ENCODE measurements at regions of chr19 and their contacts with region 1.

Region 1: DNA sequence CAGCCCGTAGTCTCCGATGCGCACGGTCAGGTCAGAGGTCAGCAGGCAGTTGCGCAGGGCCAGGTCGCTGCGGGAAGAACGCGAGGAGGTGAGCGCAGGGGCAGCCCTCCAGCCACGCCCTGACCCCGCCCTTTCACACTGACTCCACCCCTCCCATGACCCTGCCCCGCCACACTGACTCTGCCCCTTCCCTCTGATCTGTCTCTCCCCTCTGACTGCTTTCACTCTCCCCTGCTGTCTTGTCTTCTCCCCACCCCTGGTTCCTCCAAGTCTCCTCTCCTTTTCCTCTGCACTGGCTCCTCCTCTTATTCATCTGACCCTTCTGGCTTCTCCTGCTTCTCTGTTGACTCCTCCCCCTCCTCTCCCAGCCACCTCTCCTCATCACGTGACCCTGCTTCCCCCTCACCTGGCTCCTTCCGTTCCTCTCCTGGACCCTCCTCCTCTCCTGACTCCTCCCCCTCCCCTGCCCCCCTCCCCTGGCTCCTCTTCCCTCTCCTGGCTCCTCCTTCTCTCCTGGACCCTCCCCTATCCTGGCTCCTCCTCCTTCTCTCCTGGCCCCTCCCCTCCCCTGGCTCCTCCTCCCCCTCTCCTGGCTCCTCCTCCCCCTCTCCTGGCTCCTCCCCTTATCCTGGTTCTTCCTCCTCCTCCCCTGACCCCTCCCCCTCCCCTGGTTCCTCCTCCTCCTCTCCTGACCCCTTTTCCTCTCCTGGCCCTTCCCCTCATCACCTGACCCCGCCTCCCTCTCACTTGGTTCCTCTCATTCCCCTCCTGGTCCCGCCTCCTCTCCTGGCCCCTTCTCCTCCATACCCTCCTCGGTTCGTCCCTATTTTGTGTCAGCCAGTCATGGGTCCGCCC is 9.9 kb downstream of the LMTK3 start:
- DNase-seq: peak; percentile 58 to 94 (median 90)
- ATAC-seq: peak; percentile 86
- H3K4me3 ChIP-seq: peak overlapping the region; percentile 19 to 43
- H3K27ac ChIP-seq: peak overlapping the region; percentile 19 to 33
- H3K4me1 ChIP-seq: peaks cover 0 to 34% of the 10 kb centered on the region in 2 donors
- H3K27me3 ChIP-seq: peaks cover 12 to 60% of the 10 kb centered on the region in 2 donors
- CTCF ChIP-seq: no peak

Region 2: GRCh38 chr19:48445606-48446481 is 55.9 kb before region 1 on chr19 and contains the start of gene GRWD1:
- intact Hi-C with region 1: no loop called
- DNase-seq: peak; percentile 90 to 95 (median 94)
- ATAC-seq: peak; percentile 93
- H3K4me3 ChIP-seq: peak within 1 kb of the TSS; percentile 64 to 99
- H3K27ac ChIP-seq: peak within 1 kb of the TSS; percentile 90 to 94
- H3K4me1 ChIP-seq: peaks cover 16 to 43% of the 10 kb centered on the region in 2 donors
- H3K27me3 ChIP-seq: peaks cover 11 to 43% of the 10 kb centered on the region in 2 donors
- CTCF ChIP-seq: no peak
- polyA plus RNA-seq, gene GRWD1: 18.4 to 29.0 (median 24.4) TPM

Region 3: GRCh38 chr19:48461982-48462655 is 39.6 kb before region 1 on chr19:
- intact Hi-C with region 1: no loop called
- DNase-seq: peak in 1 of 4 donors; percentile 73
- ATAC-seq: no peak
- H3K4me3 ChIP-seq: no peak overlapping the region
- H3K27ac ChIP-seq: no peak overlapping the region
- H3K4me1 ChIP-seq: no peaks in the 10 kb centered on the region
- H3K27me3 ChIP-seq: no peaks in the 10 kb centered on the region
- CTCF ChIP-seq: no peak

Region 4: DNA sequence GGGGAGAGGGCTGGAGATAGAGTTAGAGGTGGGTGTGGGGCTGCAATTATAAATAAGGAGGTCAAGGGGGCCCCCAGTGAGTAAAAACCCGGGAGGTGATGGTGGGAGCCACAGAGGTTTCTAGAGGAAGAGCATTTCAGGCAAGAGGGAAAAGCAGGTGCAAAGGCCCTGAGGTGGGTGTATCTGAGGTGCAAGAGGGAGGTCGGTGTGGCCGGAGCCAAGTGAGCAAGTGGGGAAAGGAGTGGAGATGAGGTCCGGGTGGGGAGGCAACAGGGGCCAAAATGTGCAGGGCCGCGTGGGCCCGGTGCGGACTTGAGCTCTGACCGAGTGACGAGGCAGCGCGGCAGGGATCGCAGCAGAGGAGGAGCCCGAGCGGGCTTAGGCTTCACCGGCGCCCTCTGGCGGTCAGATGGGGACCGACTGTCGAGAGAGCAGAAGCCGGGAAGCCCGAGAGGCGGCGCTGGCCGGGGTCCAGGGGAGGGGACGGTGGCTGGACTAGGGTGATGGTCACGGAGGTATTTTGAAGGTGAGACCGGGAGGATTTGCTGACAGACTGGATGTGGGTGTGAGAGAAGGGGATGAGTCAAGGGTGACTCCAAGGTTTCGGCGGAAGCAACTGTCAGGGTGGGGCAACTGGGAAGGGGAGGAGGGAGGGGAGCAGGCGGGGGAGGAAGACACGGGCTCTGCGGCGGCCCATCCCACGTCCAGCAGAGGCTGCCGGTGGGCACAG is 87.1 kb after region 1 on chr19:
- intact Hi-C with region 1: loop called in 1 of 2 experiments (anchors 10 kb)
- DNase-seq: peak; percentile 73 to 99 (median 90)
- ATAC-seq: peak; percentile 86
- H3K4me3 ChIP-seq: peak overlapping the region; percentile 22 to 24
- H3K27ac ChIP-seq: no peak overlapping the region
- H3K4me1 ChIP-seq: peaks cover 3 to 16% of the 10 kb centered on the region in 2 donors
- H3K27me3 ChIP-seq: peaks cover 0 to 9% of the 10 kb centered on the region in 2 donors
- CTCF ChIP-seq: peak; percentile 85 to 94

Measured in left lung (tissue), 14 donors.